Cardiac septum (tissue), 1 donor: ENCODE measurements at regions of chr11 and their contacts with region 1.

Region 1: GRCh38 chr11:100855466-100856067 is 168.5 kb downstream of the ARHGAP42 start:
- DNase-seq: no peak

Region 2: DNA sequence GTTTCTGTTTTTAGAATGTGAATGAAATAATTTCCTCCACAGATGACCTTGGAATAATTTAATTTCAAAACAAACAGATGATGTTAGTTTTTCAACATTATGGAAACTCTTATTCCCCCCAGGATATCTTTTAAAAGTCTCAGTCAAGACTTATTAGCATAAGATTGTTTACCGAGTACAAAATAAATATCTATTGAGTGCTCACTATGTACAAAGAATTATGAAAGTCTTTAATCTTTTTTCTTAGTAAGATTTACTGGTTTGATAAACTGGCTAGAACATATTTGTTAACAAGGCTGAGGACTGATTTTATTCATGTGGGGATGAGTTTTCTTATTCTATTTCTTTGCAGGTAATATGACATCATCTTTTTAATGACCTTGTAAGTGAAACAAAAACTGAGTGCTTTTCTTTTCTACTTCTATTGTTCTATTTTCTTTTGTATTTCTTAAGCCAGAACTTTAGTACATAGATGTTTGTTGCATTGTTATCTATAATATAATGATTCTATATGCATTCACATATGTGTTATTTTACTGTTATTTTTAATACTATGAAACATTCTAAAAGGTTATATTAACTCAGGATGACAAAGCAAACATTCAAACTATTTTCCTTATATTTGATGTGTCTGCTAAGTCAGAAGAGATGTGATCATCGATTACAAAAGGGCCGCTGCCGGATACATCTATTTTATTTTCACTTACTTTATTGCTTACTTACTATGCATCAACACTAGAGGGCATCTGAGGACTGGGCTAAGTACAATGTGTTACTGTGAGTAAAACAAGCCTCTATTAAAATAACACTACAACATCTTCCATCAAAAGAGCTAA is 279.5 kb before region 1 on chr11:
- intact Hi-C with region 1: loop called (anchors 2 kb)
- DNase-seq: no peak